Activated CD4-positive, alpha-beta T cell treated with anti-CD3 and anti-CD28 coated beads, Interleukin-2, amount 10 ng/mL, durations not matched to agents 7 days and 5 days (primary cell): ENCODE measurements at regions of chr12 and their contacts with region 1.

Region 1: DNA sequence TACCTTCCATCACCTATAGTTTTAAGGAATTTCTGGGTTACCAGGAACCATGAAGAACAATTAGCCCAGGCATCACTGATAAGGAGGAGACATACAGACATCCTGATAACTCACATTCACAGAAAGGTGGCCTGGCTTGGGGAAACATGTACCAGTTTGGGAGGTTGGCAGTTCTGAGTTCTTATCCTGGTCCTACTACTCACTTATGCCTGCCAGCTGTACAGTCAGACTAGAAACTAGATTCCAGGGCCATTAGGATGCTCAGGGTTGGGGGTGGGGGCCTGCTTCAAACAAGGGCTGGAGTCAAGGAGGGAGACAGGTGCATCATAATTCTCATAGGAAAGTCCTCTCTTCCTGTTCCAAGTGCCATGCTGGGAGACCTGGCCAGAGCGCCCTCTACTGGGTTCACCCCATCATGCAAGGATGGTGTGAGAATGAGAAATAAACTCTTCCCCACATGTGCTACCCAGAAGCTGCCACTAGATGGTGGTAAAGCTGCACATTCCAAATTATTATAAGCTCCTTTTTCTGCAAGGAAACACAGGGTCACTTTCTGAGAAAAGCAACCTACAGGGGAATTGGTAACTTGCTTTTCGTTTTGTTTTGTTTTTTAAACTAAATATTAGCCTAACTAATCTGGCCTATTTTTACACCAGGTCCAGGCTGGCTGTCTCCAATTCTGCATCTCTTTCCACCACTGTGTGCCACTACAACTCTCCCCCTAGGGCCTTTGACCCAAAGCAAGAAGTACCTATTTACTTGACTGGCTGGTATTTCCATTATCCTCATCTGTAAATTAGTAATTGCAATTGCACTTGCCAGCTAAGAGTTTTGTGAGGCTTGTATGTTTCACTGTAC is 14.5 kb downstream of the OAS2 start:
- DNase-seq: peak; percentile 69
- H3K4me3 Mint-ChIP-seq: no peak overlapping the region
- H3K27ac Mint-ChIP-seq: no peak overlapping the region
- H3K4me1 Mint-ChIP-seq: peaks cover 44% of the 10 kb centered on the region
- H3K27me3 Mint-ChIP-seq: no peaks in the 10 kb centered on the region

Region 2: GRCh38 chr12:112937741-112938719 is 54.7 kb before region 1 on chr12 and contains the start of gene OAS3:
- CTCF ChIA-PET with region 1: interaction called, 15 read pairs
- POLR2A ChIA-PET with region 1: no interaction called
- DNase-seq: peak; percentile 77
- H3K4me3 Mint-ChIP-seq: peak within 1 kb of the TSS; percentile 80
- H3K27ac Mint-ChIP-seq: peak within 1 kb of the TSS; percentile 94
- H3K4me1 Mint-ChIP-seq: peaks cover 52% of the 10 kb centered on the region
- H3K27me3 Mint-ChIP-seq: no peaks in the 10 kb centered on the region
- total RNA-seq, gene OAS3: 202 to 204 TPM

Region 3: GRCh38 chr12:112978163-112979040 is 14.4 kb before region 1 on chr12 and contains the start of gene OAS2:
- CTCF ChIA-PET with region 1: interaction called, 45 read pairs
- POLR2A ChIA-PET with region 1: interaction called, 13 read pairs
- DNase-seq: peak; percentile 94
- H3K4me3 Mint-ChIP-seq: peak within 1 kb of the TSS; percentile 84
- H3K27ac Mint-ChIP-seq: peak within 1 kb of the TSS; percentile 99
- H3K4me1 Mint-ChIP-seq: peaks cover 52% of the 10 kb centered on the region
- H3K27me3 Mint-ChIP-seq: no peaks in the 10 kb centered on the region
- total RNA-seq, gene OAS2: 294 to 420 TPM

Region 4: GRCh38 chr12:113103756-113104450 is 111.1 kb after region 1 on chr12:
- CTCF ChIA-PET with region 1: no interaction called
- POLR2A ChIA-PET with region 1: no interaction called
- DNase-seq: peak; percentile 69
- H3K4me3 Mint-ChIP-seq: peak overlapping the region; percentile 50
- H3K27ac Mint-ChIP-seq: peak overlapping the region; percentile 38
- H3K4me1 Mint-ChIP-seq: peaks cover 11% of the 10 kb centered on the region
- H3K27me3 Mint-ChIP-seq: no peaks in the 10 kb centered on the region

Region 5: DNA sequence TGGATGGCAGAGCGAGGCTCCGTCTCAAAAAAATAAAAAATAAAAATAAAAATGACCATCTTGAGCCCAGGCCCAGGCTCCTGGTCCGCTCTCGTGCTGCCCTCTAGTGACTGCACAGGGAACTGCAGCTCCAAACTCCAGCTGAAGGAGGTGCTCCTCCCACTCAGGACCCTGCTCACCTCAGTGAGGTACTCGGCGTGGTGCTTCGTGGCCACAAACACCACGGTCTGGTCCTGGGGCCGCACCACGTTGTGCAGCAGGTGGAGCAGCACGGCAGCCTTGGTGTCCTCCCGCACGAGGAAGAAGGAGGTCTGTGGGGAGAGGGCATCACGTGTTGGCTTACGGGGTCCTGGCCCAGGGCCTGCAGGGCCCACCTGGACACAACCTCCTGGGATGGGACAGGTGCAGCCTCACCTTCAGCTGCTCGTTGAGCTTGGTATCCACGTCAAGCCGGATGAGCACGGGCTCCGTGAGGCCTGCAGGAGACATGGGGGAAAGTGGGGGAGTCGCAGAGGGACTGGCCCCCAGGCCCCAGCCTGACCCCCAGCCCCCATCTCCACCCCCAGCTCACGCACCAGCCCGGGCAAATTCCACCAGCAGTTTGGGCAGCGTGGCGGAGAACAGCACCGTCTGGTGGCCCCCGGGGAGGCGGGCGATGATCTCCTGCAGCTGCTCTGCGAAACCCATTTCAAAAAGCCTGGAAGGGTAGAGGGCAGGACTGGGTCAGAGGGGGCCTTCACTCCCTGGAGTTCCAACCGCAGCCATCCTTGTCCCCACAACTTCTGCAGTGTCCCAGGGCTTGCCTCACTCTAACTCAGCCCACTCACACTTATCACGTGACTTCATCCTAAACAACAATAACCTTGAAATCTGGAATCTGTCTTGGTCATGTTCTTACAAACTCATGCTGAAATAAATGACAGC is 182.0 kb after region 1 on chr12:
- CTCF ChIA-PET with region 1: interaction called, 11 read pairs
- POLR2A ChIA-PET with region 1: no interaction called
- DNase-seq: peak; percentile 77
- H3K4me3 Mint-ChIP-seq: no peak overlapping the region
- H3K27ac Mint-ChIP-seq: no peak overlapping the region
- H3K4me1 Mint-ChIP-seq: peaks cover 2% of the 10 kb centered on the region
- H3K27me3 Mint-ChIP-seq: no peaks in the 10 kb centered on the region